Activated CD8-positive, alpha-beta memory T cell treated with anti-CD3 and anti-CD28 coated beads, Interleukin-2, amount 10 ng/mL, durations not matched to agents 7 days and 5 days (primary cell): ENCODE measurements at regions of chr18 and their contacts with region 1.

Region 1: DNA sequence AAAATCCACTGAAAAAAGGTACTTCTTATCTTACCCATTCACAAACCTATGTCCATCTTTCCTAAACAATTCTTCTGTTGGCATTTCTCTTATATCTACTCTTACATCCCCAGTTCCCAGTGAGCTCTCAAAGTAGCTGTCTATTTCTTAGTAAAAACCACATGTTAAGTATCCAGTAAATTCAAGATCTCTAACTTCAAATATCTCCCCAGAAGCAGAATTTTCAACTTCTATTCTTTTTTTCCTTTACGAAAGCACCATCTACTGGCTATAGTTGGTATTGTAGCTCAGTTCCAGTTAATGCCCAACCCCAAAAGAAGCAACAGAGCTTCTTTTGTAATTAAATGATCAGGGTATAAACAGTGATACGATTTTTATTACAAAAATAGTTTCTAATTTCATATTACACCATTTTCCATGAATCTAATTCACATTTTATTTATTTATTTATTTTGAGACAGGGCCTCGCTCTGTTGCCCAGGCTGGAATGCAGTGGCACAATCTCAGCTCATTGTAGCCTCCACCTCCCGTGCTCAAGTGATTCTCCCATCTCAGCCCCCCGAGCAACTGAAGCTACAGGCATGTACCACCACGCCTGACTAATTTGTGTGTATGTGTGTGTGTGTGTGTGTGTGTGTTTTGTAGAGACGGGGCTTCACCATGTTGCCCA is 28.5 kb downstream of the HRH4 start:
- DNase-seq: no peak
- ATAC-seq: no peak
- H3K4me3 Mint-ChIP-seq: no peak overlapping the region
- H3K27ac Mint-ChIP-seq: no peak overlapping the region
- H3K4me1 Mint-ChIP-seq: peaks cover 14% of the 10 kb centered on the region
- H3K27me3 Mint-ChIP-seq: peaks cover 39% of the 10 kb centered on the region

Region 2: DNA sequence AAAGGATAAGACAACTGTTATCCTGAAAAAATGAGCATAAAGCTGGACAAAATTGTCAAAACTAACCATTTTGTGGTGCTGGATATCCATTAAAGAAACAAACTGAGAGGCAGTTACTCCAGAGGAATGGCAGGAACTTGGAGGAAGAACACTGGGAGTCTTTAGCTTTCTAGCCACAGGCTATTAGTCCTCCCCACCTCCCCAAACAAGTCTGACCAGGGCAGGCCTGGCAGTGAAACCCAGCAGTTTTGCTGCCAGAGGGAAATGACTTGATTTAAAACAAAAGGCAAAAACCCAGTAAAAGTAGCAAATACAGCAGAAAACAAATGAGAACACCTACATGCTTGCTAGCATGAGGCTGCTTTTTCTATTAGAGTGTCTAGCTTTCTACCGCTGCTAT is 126.2 kb before region 1 on chr18:
- CTCF ChIA-PET with region 1: interaction called, 99 read pairs
- DNase-seq: no peak
- ATAC-seq: no peak
- H3K4me3 Mint-ChIP-seq: no peak overlapping the region
- H3K27ac Mint-ChIP-seq: no peak overlapping the region
- H3K4me1 Mint-ChIP-seq: no peaks in the 10 kb centered on the region
- H3K27me3 Mint-ChIP-seq: peaks cover 5% of the 10 kb centered on the region

Region 3: GRCh38 chr18:24368749-24369148 is 120.2 kb before region 1 on chr18:
- CTCF ChIA-PET with region 1: interaction called, 11 read pairs
- DNase-seq: peak; percentile 41
- ATAC-seq: no peak
- H3K4me3 Mint-ChIP-seq: no peak overlapping the region
- H3K27ac Mint-ChIP-seq: no peak overlapping the region
- H3K4me1 Mint-ChIP-seq: peaks cover 18% of the 10 kb centered on the region
- H3K27me3 Mint-ChIP-seq: no peaks in the 10 kb centered on the region

Region 4: DNA sequence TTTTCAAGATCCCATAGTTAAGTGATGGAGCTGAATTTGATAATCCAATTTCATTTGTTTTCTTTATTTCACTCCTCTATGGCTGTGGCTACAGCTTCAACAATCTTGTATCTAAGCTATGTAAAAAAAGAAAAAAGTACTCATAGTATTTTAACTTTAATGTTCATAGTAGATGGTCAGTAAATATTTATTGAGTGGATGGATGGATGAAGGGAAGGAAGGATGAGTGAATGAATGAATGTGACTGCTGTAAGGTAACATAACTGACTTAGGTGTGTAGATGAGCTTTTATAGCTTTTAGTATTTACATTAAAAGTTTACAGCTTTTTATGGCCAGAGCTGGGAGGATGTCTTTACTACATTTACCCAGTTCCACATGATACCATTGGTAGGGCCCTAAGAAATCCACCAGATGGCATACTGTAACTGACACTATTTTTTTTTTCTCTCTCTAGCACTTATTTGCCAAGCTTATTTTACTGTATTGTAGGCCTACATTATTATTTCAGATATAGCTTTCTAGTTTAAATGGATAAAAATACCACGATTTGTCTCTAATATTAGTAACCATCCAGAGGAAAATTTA is 41.9 kb before region 1 on chr18:
- CTCF ChIA-PET with region 1: interaction called, 18 read pairs
- DNase-seq: no peak
- ATAC-seq: no peak
- H3K4me3 Mint-ChIP-seq: no peak overlapping the region
- H3K27ac Mint-ChIP-seq: no peak overlapping the region
- H3K4me1 Mint-ChIP-seq: peaks cover 14% of the 10 kb centered on the region
- H3K27me3 Mint-ChIP-seq: no peaks in the 10 kb centered on the region

Region 5: DNA sequence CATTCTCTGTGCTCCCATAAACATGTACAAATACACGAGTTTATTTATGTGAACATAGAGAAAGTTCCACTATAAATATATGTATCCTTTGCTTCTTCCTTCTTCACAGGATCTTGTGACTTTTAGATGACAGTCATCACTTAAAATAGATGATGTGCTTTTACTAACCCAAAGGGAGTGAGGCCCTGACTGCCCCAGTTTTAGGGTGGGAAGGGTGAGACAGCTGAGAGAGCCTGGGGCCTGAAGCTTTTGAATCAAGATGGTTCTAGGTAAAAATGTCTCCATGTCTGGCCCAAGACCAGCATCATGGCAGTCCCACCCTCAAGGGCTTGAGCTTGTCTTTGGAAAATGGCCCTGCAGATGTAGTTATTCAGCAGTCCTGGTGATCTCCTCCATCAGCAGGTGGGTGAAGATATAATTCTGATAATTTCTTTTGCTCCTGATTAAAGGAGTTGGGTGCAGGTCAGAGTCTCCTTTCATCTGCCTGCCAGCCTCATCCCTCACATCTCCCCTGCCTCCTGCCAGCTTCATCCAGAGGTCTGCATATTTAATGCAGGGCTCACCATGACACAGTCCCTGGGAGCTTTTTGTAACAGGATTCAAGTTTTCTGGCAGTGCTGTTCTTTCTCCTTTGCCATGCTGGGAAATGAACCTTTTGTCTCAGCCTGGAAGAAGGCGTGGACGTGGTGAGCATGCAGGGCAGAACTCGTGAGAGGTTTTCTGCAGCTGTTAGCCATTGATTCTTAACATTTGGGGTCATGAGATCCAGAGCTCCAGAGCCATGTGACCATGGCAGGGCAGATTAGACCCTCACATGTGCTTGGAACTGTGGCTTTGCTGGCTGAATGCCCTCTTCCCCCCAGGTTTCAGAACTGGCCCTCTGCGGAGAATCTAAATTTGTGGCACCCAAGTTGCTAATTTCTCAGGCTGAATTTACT is 25.9 kb before region 1 on chr18:
- CTCF ChIA-PET with region 1: interaction called, 11 read pairs
- DNase-seq: no peak
- ATAC-seq: no peak
- H3K4me3 Mint-ChIP-seq: no peak overlapping the region
- H3K27ac Mint-ChIP-seq: no peak overlapping the region
- H3K4me1 Mint-ChIP-seq: peaks cover 21% of the 10 kb centered on the region
- H3K27me3 Mint-ChIP-seq: peaks cover 2% of the 10 kb centered on the region

Region 6: DNA sequence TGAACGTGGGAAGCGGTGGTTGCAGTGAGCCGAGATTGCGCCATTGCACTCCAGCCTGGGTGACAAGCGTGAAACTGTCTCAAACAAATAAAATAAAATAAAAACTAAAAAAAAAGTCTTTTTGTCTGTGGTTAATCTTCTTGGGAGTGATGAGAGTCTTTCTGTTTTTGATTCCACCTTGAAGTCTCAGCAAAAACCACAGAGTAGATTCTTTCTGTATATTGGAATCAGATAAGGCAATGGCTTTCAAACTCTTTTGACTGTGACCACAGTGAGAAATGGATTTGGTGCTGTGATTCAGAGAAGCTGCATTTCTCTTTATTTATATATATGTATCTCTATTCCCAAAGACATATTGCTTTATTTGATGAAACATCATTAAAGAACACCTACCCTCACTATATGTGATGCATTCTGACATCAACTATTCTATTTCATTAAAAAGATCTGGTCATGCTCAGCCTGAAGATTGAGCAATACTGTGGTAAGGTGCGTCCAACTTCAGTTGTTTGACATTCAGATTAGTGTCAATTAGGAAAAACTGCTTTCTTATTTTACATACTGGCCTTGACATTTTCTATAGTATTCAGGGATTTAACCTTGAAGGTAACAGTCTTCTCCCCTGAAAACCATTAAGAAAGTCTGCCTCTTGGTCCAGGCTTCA is 12.9 kb before region 1 on chr18:
- CTCF ChIA-PET with region 1: interaction called, 19 read pairs
- DNase-seq: no peak
- ATAC-seq: no peak
- H3K4me3 Mint-ChIP-seq: no peak overlapping the region
- H3K27ac Mint-ChIP-seq: no peak overlapping the region
- H3K4me1 Mint-ChIP-seq: no peaks in the 10 kb centered on the region
- H3K27me3 Mint-ChIP-seq: peaks cover 22% of the 10 kb centered on the region

Region 7: GRCh38 chr18:24726727-24727492 is 238.0 kb after region 1 on chr18:
- CTCF ChIA-PET with region 1: interaction called, 10 read pairs
- DNase-seq: peak; percentile 58
- ATAC-seq: no peak
- H3K4me3 Mint-ChIP-seq: no peak overlapping the region
- H3K27ac Mint-ChIP-seq: no peak overlapping the region
- H3K4me1 Mint-ChIP-seq: no peaks in the 10 kb centered on the region
- H3K27me3 Mint-ChIP-seq: peaks cover 10% of the 10 kb centered on the region